ENCODE measurements at regions of chr4 and their contacts with region 1.

Region 1: DNA sequence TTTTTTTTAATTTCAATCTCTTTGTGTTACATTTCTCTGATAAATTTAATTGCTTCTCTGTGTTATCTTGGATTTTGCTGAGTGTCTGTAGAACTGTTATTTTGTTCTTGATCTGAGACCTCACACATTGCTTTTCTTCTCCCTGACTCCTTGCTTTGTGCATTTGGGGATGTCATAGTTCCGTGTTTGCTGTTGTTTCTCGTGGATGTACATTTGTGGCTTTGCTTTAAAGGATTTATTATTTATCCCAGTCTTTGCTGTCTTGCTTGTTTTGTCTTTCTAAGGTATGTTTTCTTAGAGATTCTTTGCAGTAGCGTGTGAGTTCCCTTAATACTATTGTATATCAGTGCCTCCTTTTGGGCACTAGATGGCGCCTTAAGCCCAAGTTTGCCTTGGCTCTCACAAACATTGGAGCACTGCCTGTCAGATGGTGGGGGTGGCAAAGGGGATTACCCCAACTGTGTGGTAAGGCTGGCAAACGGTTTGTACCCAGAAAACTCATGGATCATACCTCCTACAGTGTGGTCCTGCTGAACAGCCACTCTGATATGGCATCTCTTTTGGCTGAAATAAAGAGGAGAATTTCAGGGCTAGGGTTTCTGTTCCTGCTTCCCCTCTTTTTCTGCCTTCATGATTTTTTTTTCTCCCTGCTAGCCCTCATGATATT is 96.4 kb downstream of the PGRMC2 start:
- DNase-seq: peak; percentile 21 to 55
- ATAC-seq: peak; percentile 74 to 92 (median 84)
- H3K4me3 ChIP-seq: no peak overlapping the region
- H3K27ac ChIP-seq: no peak overlapping the region
- H3K4me1 ChIP-seq: peaks cover 0 to 10% (median 0%) of the 10 kb centered on the region in 9 donors
- H3K27me3 ChIP-seq: no peaks in the 10 kb centered on the region
- CTCF ChIP-seq: peak; percentile 71 to 90 (median 86)

Region 2: DNA sequence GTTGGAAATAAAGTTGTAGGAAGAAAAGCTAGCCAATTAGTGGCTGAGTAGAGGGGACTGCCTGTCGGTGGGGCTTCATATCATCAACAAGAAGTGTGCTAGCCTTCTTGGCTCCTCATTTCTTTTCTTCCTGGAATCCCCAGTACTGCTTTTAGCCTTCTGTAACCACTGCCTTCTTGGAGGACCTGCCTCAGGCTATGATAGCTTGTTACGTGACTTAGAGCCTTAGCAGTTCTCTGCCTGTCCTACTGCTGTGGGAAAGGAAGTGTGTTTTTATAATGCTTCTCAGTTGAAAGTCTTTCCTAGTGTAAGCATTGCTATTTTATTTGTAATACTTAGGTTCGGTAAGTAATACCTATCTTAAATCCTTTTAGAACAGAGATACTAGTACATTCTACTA is 68.2 kb before region 1 on chr4:
- intact Hi-C with region 1: no loop called
- DNase-seq: no peak
- ATAC-seq: no peak
- H3K4me3 ChIP-seq: no peak overlapping the region
- H3K27ac ChIP-seq: no peak overlapping the region
- H3K4me1 ChIP-seq: no peaks in the 10 kb centered on the region
- H3K27me3 ChIP-seq: no peaks in the 10 kb centered on the region
- CTCF ChIP-seq: no peak

Region 3: DNA sequence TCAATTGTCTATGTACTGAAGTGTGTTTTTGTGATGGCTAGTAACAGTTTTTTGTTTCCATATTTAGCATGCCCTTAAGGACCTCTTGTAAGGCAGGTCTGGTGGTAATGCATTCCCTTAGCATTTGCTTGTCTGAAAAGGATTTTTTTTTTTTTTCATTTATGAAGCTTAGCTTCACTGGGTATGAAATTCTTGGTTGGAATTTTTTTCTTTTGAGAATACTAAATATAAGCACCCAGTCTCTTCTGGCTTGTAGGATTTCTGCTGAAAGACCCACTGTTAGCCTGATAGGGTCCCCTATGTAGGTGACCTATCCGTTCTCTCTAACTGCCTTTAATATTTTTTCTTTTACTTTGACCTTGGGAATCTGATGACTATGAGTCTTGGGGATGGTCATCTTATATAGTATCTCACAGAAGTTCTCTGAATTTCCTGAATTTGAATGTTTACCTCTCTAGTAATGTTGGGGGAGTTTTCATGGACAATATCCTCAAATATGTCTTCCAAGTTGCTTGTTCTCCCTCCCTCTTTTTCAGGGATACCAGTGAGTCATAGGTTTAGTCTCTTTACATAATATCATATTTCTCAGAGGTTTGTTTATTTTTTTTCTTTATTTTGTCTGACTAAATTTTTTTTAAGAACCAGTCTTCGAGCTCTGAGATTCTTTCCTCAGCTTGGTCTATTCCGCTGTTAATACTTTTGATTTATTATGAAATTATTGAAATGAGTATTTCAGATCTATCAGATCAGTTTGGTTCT is 253.5 kb after region 1 on chr4:
- intact Hi-C with region 1: loop called in 1 of 10 experiments (anchors 10 kb)
- DNase-seq: no peak
- ATAC-seq: no peak
- H3K4me3 ChIP-seq: no peak overlapping the region
- H3K27ac ChIP-seq: no peak overlapping the region
- H3K4me1 ChIP-seq: no peaks in the 10 kb centered on the region
- H3K27me3 ChIP-seq: no peaks in the 10 kb centered on the region
- CTCF ChIP-seq: no peak

Region 4: DNA sequence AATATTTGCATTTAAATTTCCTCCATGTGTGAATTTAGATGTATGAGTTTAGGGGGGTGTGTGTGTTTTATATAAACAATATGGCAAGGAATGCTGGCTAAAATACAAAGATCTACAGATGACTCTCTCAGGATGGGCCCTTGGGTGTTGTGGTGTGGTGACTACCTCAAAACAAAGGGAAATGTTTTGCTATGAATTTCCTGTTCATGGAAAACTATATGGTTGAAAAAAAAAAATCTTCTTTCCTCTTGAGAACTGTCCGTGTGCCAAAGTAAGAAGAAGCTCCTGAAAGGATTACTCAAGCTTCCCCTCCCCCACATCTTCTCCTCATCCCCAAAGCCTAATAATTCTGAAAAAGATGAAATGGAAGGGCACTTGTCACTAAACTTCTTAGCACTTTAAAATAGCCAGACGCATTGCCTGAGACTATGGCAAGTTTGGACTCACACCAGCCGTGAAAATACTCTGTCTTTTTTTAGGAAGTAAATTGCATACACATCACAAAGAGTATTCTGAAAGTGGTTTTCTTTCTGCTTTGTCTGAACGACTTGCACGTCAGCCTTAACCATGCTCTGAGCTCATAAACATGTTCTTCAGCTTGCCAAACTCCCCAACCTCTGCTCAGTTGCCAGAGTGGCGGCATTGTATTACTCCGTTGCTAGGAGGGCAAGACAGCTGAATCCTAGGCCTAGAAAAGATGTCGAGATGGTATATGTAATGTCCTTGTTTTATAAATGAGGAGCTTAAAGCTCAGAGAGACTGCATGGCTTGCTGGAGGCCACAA is 367.8 kb after region 1 on chr4:
- intact Hi-C with region 1: loop called in 1 of 10 experiments (anchors 10 kb)
- DNase-seq: no peak
- ATAC-seq: peak in 7 of 8 donors; percentile 20 to 72 (median 54)
- H3K4me3 ChIP-seq: no peak overlapping the region
- H3K27ac ChIP-seq: peak overlapping the region in 6 of 10 donors; percentile 5 to 80 (median 36)
- H3K4me1 ChIP-seq: peaks cover 0 to 23% (median 7%) of the 10 kb centered on the region in 9 donors
- H3K27me3 ChIP-seq: no peaks in the 10 kb centered on the region
- CTCF ChIP-seq: no peak

Region 5: DNA sequence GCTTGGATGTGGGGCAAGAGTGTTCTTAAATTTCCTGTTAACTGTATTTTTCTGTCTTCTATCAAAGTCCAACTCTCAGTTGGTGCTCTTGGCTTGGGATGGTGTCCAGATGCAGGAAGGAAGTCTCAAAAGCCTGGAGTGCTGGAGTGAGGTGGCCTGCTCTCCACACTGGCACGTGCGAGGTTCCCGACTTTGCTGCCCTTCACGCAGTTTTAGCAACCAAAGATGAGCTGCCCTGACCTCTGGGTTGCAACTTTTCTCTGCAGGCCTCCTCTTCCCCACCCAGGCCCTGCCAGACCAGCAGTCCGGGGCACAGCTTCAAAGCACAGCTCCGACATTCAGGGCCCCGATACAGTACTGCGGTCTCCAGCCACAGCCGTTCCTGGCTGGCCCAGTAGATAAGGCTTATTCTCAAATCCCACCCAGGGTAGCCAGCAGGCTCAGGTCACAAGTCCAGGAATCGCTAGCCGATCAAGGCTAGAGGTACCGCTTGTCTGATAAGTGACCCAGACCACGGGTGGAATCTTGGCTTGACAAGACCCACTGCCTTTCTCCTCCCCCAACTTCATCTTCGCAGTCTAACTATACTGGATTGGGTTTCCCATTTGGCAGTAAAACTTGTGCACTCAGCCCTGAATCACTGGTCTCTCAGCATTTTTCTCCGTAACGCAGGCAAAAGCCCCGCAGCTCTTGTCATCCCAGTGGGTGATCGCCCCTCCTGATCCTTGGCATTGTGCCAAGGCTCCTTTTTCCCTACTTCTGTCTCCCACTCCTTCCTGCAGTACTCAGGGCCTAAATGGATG is 596.5 kb after region 1 on chr4:
- intact Hi-C with region 1: no loop called
- DNase-seq: no peak
- ATAC-seq: peak in 2 of 8 donors; percentile 26 to 53
- H3K4me3 ChIP-seq: no peak overlapping the region
- H3K27ac ChIP-seq: no peak overlapping the region
- H3K4me1 ChIP-seq: no peaks in the 10 kb centered on the region
- H3K27me3 ChIP-seq: no peaks in the 10 kb centered on the region
- CTCF ChIP-seq: no peak

Measured in heart right ventricle (tissue), 16 donors.